ENCODE measurements at regions of chr7 and their contacts with region 1.

Region 1: DNA sequence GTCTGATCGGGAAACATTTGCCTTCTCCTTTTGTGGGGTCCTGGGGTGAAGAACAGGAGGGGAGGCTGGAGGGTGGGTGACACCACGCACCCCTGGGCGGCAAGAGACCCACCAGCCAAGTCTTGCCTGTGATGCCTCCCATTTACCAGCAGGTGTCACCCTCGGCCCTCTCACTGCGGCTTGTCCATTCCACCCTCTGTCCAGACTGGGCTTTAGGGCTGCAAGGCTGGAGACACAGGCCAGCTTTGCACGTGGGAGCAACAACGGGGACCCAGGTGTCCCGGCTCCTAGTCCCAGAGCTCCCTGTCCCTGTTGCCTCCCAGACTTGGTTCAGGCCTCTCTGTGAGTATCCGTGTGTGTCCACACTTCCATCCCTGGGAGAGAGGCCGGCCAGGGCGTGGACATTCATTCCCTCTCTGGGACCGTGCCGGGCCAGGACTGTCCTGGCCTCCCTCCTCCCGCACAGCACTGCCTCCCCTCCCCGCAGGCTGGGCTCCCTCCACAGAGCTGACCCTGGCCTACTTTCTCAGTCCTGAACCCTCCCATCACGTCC is 36.2 kb upstream of the GTF2IRD1 start:
- DNase-seq: peak; percentile 48
- ATAC-seq: peak; percentile 84
- H3K4me3 Mint-ChIP-seq: no peak overlapping the region
- H3K27ac Mint-ChIP-seq: no peak overlapping the region
- H3K4me1 Mint-ChIP-seq: no peaks in the 10 kb centered on the region
- H3K27me3 Mint-ChIP-seq: no peaks in the 10 kb centered on the region
- CTCF ChIP-seq: peak; percentile 98

Region 2: GRCh38 chr7:74475613-74476321 is 58.3 kb after region 1 on chr7:
- CTCF ChIA-PET with region 1: no interaction called
- POLR2A ChIA-PET with region 1: no interaction called
- intact Hi-C with region 1: no loop called
- DNase-seq: no peak
- ATAC-seq: no peak
- H3K4me3 Mint-ChIP-seq: no peak overlapping the region
- H3K27ac Mint-ChIP-seq: no peak overlapping the region
- H3K4me1 Mint-ChIP-seq: peaks cover 26% of the 10 kb centered on the region
- H3K27me3 Mint-ChIP-seq: peaks cover 2% of the 10 kb centered on the region
- CTCF ChIP-seq: no peak

Region 3: GRCh38 chr7:74505471-74506324 is 88.2 kb after region 1 on chr7:
- CTCF ChIA-PET with region 1: no interaction called
- POLR2A ChIA-PET with region 1: no interaction called
- intact Hi-C with region 1: no loop called
- DNase-seq: no peak
- ATAC-seq: no peak
- H3K4me3 Mint-ChIP-seq: no peak overlapping the region
- H3K27ac Mint-ChIP-seq: no peak overlapping the region
- H3K4me1 Mint-ChIP-seq: no peaks in the 10 kb centered on the region
- H3K27me3 Mint-ChIP-seq: no peaks in the 10 kb centered on the region
- CTCF ChIP-seq: no peak

Region 4: DNA sequence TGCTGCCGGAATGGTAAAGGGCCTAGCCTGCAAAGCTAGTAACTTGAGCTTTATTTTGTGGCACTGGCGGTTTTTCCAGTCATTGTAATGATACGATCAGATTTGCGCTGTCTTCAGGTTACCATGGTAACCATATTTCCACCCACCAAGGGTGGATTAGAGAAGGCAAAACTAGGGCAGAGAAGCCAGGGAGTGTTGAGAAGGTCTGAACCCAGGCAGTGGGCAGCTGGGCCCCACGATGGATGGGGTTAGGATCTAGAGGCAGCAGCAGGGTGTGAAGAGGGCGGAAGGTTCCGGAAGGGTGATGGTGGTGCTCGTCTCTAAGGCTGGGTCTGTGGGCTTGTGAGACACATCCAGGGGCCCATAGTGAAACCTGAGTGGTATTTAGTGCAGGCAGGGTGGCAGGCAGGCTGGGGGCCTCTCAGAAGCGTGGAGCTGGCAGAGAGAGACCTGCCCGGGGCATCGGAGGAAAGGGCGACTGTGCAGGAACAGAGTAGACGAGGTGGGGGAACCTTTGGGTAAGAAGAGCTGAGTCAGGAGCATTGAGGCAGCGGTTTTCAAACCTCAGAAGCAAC is 152.1 kb after region 1 on chr7:
- CTCF ChIA-PET with region 1: interaction called, 4 read pairs
- POLR2A ChIA-PET with region 1: no interaction called
- intact Hi-C with region 1: loop called (anchors 1 kb)
- DNase-seq: no peak
- ATAC-seq: no peak
- H3K4me3 Mint-ChIP-seq: no peak overlapping the region
- H3K27ac Mint-ChIP-seq: no peak overlapping the region
- H3K4me1 Mint-ChIP-seq: peaks cover 3% of the 10 kb centered on the region
- H3K27me3 Mint-ChIP-seq: peaks cover 5% of the 10 kb centered on the region
- CTCF ChIP-seq: no peak

Region 5: GRCh38 chr7:74709880-74710671 is 292.6 kb after region 1 on chr7:
- CTCF ChIA-PET with region 1: no interaction called
- POLR2A ChIA-PET with region 1: no interaction called
- intact Hi-C with region 1: no loop called
- DNase-seq: no peak
- ATAC-seq: no peak
- H3K4me3 Mint-ChIP-seq: no peak overlapping the region
- H3K27ac Mint-ChIP-seq: no peak overlapping the region
- H3K4me1 Mint-ChIP-seq: no peaks in the 10 kb centered on the region
- H3K27me3 Mint-ChIP-seq: no peaks in the 10 kb centered on the region
- CTCF ChIP-seq: no peak

Region 6: GRCh38 chr7:75045881-75046280 is 628.4 kb after region 1 on chr7:
- CTCF ChIA-PET with region 1: no interaction called
- POLR2A ChIA-PET with region 1: no interaction called
- intact Hi-C with region 1: loop called (anchors 1 kb)
- DNase-seq: no peak
- ATAC-seq: no peak
- H3K4me3 Mint-ChIP-seq: no peak overlapping the region
- H3K27ac Mint-ChIP-seq: no peak overlapping the region
- H3K4me1 Mint-ChIP-seq: no peaks in the 10 kb centered on the region
- H3K27me3 Mint-ChIP-seq: no peaks in the 10 kb centered on the region
- CTCF ChIP-seq: no peak

Region 7: GRCh38 chr7:75599244-75599781 is 1181.8 kb after region 1 on chr7:
- CTCF ChIA-PET with region 1: no interaction called
- POLR2A ChIA-PET with region 1: no interaction called
- intact Hi-C with region 1: no loop called
- DNase-seq: no peak
- ATAC-seq: no peak
- H3K4me3 Mint-ChIP-seq: no peak overlapping the region
- H3K27ac Mint-ChIP-seq: no peak overlapping the region
- H3K4me1 Mint-ChIP-seq: peaks cover 4% of the 10 kb centered on the region
- H3K27me3 Mint-ChIP-seq: no peaks in the 10 kb centered on the region
- CTCF ChIP-seq: no peak

Measured in activated B cell treated with CpG ODN at 0.5 μM for 24 hours (primary cell).